Heart right ventricle (tissue), 16 donors: ENCODE measurements at regions of chr7 and their contacts with region 1.

Region 1: GRCh38 chr7:45663167-45663921 is 89.2 kb downstream of the ADCY1 start:
- DNase-seq: peak; percentile 18 to 57
- ATAC-seq: peak in 7 of 8 donors; percentile 46 to 70 (median 61)
- H3K4me3 ChIP-seq: no peak overlapping the region
- H3K27ac ChIP-seq: no peak overlapping the region
- H3K4me1 ChIP-seq: no peaks in the 10 kb centered on the region
- H3K27me3 ChIP-seq: no peaks in the 10 kb centered on the region
- CTCF ChIP-seq: peak; percentile 47 to 77 (median 72)

Region 2: DNA sequence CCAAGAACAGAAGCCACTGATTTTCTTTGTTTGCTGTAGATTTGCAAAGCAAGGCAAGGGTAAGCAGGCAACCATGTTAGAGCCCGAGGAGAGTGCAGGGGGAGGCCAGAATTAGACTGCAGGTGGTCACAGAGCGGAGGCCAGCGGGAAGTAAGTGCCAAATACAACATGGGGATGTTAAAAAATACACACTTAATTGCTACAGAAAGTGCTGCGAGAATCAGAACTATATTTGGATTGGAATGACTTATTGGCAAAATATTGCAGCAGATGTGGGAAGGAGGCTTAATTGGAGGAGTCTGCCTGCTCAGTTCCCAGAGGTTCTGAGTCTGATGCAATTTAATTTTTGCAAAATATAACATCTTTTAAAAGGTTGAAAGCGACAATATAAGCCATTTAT is 138.9 kb before region 1 on chr7:
- intact Hi-C with region 1: no loop called
- DNase-seq: peak in 1 of 2 donors; percentile 42
- ATAC-seq: peak in 7 of 8 donors; percentile 51 to 90 (median 88)
- H3K4me3 ChIP-seq: no peak overlapping the region
- H3K27ac ChIP-seq: peak overlapping the region in 3 of 10 donors; percentile 32 to 43 (median 41)
- H3K4me1 ChIP-seq: peaks cover 0 to 5% (median 0%) of the 10 kb centered on the region in 9 donors
- H3K27me3 ChIP-seq: peaks cover 0 to 1% (median 0%) of the 10 kb centered on the region in 7 donors
- CTCF ChIP-seq: no peak

Region 3: GRCh38 chr7:45863715-45864114 is 200.4 kb after region 1 on chr7:
- intact Hi-C with region 1: loop called in 3 of 10 experiments (anchors 10 kb)
- DNase-seq: no peak
- ATAC-seq: no peak
- H3K4me3 ChIP-seq: no peak overlapping the region
- H3K27ac ChIP-seq: no peak overlapping the region
- H3K4me1 ChIP-seq: no peaks in the 10 kb centered on the region
- H3K27me3 ChIP-seq: peaks cover 0 to 37% (median 26%) of the 10 kb centered on the region in 7 donors
- CTCF ChIP-seq: no peak